Endothelial cell of umbilical vein (primary cell): ENCODE measurements at regions of chr1 and their contacts with region 1.

Region 1: GRCh38 chr1:156927215-156928042 is 7.0 kb downstream of the LRRC71 start:
- DNase-seq: peak; percentile 79
- H3K4me3 ChIP-seq: peak overlapping the region in 1 of 3 experiments; percentile 17
- H3K27ac ChIP-seq: no peak overlapping the region
- H3K4me1 ChIP-seq: peaks cover 2% of the 10 kb centered on the region
- H3K27me3 ChIP-seq: peaks cover 17 to 25% of the 10 kb centered on the region in 2 experiments
- CTCF ChIP-seq: peak; percentile 82 to 93
- POLR2A ChIP-seq: no peak

Region 2: DNA sequence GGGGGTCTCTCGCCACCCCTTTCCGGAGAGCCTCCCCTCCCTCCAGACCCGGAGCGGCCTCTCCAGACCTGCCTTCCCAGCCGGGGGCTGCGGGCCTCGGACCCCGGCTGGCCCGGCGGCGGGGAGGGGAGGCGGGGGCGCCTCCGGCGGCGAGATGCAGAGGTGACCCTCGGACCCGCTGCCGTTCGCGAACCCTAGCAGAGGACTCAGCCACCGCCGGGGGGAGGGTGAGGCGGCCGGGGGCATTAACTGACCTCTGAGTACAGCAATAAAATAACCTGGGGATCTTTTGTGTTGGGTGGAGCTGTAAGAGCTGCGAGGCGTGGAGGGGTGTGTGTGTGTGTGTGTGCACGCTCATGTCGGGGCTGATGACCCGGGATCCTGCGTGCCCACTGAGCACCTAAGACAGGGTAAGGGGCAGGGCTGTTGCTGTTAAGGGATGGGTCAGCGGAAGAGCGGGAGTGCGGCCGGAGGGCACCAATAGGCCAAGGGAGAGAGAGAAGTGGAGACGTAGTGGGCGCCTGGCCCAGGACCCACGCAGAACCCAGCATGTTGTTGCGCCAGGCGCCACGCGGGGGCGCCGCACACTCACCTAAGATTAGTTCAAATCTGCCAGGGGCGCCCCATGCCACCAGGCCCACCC is 301.9 kb before region 1 on chr1:
- CTCF ChIA-PET with region 1: interaction called, 8 read pairs
- POLR2A ChIA-PET with region 1: no interaction called
- dilution Hi-C with region 1: no loop called
- intact Hi-C with region 1: loop called (anchors 5 kb)
- DNase-seq: peak; percentile 47
- H3K4me3 ChIP-seq: no peak overlapping the region
- H3K27ac ChIP-seq: no peak overlapping the region
- H3K4me1 ChIP-seq: peaks cover 10% of the 10 kb centered on the region
- H3K27me3 ChIP-seq: peaks cover 36% of the 10 kb centered on the region in 2 experiments
- CTCF ChIP-seq: peak; percentile 69 to 90
- POLR2A ChIP-seq: no peak

Region 3: DNA sequence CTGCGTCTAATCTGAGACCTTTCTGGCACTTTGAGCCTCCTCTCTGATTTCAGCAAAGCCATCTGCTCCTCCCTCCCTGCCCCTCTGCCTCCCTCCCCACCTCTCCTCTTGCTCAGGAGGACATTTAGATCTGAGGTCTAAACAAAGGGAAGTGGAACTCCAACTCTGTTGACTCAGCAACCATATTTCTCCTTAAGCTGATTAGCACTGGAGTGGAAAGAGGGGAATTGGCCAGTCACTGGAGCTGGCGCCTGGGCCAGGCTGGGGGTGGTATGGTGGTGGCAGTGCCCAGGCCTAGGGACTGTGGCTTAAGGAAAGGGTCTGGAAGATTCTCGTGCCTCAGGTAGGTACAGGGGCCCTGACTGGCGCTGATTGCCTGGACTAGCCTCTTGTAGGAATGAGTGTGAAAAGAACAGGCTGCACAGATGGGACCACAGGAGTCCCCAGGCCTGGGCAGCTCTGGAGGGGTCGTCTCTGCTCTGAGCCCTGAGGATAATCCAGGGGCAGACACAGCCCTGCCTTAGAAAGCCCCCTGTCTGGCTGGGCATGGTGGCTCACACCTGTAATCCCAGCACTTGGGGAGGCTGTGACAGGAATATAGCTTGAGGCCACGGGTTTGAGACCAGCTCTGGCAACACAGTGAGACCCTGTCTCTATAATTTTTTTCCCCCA is 122.7 kb before region 1 on chr1:
- CTCF ChIA-PET with region 1: interaction called, 12 read pairs
- POLR2A ChIA-PET with region 1: no interaction called
- dilution Hi-C with region 1: no loop called
- intact Hi-C with region 1: no loop called
- DNase-seq: peak; percentile 10
- H3K4me3 ChIP-seq: no peak overlapping the region
- H3K27ac ChIP-seq: no peak overlapping the region
- H3K4me1 ChIP-seq: peaks cover 10% of the 10 kb centered on the region
- H3K27me3 ChIP-seq: no peaks in the 10 kb centered on the region
- CTCF ChIP-seq: no peak
- POLR2A ChIP-seq: no peak

Region 4: DNA sequence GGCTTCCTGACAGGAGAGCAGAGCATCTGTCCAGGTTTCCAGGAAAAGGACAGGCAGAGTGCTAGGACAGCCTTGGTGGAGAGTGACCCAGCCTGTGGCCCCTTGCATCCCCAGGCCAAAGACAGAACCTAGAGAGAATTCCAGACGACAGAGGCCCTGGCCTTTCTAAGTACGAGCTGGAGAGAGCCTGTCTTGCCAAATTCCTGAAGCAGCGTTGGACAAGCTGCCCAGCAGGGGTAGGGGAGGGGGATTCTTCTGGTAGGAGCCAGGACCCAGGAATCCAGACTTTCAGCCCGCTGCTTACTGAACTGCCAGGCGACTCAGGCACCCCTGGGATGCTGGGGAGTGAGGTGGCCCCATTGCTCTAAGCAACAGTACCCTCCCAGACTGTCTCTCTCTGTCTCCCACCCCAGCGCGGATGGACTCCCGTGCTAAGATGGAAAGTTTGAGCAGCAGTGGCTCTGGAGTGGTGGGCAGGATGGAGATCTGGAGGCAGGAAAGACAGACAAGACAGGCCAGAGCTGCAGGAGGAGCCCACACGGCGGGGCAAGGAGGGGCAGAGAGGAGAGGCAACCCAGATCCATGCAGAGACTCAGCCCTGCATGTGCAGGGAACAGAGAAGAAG is 42.8 kb before region 1 on chr1:
- CTCF ChIA-PET with region 1: interaction called, 312 read pairs
- POLR2A ChIA-PET with region 1: interaction called, 3 read pairs
- dilution Hi-C with region 1: no loop called
- intact Hi-C with region 1: no loop called
- DNase-seq: no peak
- H3K4me3 ChIP-seq: no peak overlapping the region
- H3K27ac ChIP-seq: no peak overlapping the region
- H3K4me1 ChIP-seq: peaks cover 2% of the 10 kb centered on the region
- H3K27me3 ChIP-seq: peaks cover 5 to 22% of the 10 kb centered on the region in 2 experiments
- CTCF ChIP-seq: no peak
- POLR2A ChIP-seq: no peak

Region 5: GRCh38 chr1:157073944-157074767 is 146.7 kb after region 1 on chr1:
- CTCF ChIA-PET with region 1: interaction called, 22 read pairs
- POLR2A ChIA-PET with region 1: interaction called, 4 read pairs
- dilution Hi-C with region 1: no loop called
- intact Hi-C with region 1: loop called (anchors 1 kb)
- DNase-seq: peak; percentile 66
- H3K4me3 ChIP-seq: no peak overlapping the region
- H3K27ac ChIP-seq: no peak overlapping the region
- H3K4me1 ChIP-seq: no peaks in the 10 kb centered on the region
- H3K27me3 ChIP-seq: peaks cover 23 to 29% of the 10 kb centered on the region in 2 experiments
- CTCF ChIP-seq: peak; percentile 52 to 77
- POLR2A ChIP-seq: no peak